Transverse colon (tissue), 4 donors: ENCODE measurements at regions of chr4 and their contacts with region 1.

Region 1: GRCh38 chr4:15303052-15303641 is 124.7 kb upstream of the C1QTNF7 start:
- DNase-seq: no peak
- H3K4me3 ChIP-seq: no peak overlapping the region
- H3K27ac ChIP-seq: peak overlapping the region in 3 of 4 donors; percentile 5 to 53 (median 51)
- H3K4me1 ChIP-seq: peaks cover 0 to 12% (median 1%) of the 10 kb centered on the region in 4 donors
- H3K27me3 ChIP-seq: no peaks in the 10 kb centered on the region
- CTCF ChIP-seq: no peak
- EP300 ChIP-seq: no peak
- POLR2A ChIP-seq: no peak

Region 2: DNA sequence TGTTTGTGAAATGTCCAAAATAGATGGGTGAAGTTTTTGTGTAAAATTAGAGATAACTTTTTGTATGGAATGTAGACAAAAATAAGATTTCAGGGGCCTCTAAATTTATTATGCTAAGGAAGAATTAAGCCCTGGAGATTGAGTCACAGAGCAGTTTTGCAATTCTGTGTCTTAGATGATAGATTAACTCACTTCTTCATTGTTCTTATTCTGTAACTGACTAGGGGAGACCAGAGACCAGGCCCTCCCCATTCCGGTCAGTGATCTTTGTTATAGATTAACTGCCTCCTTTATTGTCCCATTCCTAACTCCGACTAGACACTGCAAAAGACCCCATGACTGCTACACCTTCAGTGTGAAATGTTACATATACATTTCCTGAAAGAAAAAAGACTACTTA is 1161.5 kb after region 1 on chr4:
- in situ Hi-C with region 1: no loop called
- intact Hi-C with region 1: no loop called
- DNase-seq: no peak
- H3K4me3 ChIP-seq: no peak overlapping the region
- H3K27ac ChIP-seq: no peak overlapping the region
- H3K4me1 ChIP-seq: no peaks in the 10 kb centered on the region
- H3K27me3 ChIP-seq: no peaks in the 10 kb centered on the region
- CTCF ChIP-seq: no peak
- EP300 ChIP-seq: no peak
- POLR2A ChIP-seq: no peak

Region 3: DNA sequence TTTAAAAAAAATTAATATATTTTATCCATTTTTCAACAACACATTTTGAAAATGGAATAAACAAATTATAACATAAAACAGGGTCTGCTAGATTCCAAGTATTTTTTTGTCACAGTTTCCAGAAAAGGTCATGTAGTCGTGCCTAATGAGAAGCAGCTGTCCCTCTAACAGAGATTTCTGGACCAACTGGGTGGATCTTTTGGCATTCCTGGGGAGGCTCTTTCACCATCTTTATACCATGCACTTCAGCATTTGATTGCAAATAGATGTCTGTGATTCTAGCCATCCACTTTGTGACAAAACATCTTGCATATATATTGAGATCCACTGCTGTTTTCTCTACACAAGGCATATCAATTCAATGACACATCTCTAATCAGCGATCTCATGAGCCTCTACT is 1806.0 kb after region 1 on chr4:
- in situ Hi-C with region 1: no loop called
- intact Hi-C with region 1: loop called (anchors 5 kb)
- DNase-seq: no peak
- H3K4me3 ChIP-seq: no peak overlapping the region
- H3K27ac ChIP-seq: no peak overlapping the region
- H3K4me1 ChIP-seq: no peaks in the 10 kb centered on the region
- H3K27me3 ChIP-seq: no peaks in the 10 kb centered on the region
- CTCF ChIP-seq: no peak
- EP300 ChIP-seq: no peak
- POLR2A ChIP-seq: no peak